HEK293T (cell line): ENCODE measurements at regions of chr17 and their contacts with region 1.

Region 1: GRCh38 chr17:46193151-46193625 is at the start of gene KANSL1:
- DNase-seq: peak; percentile 94

Region 2: GRCh38 chr17:46108550-46109110 is 84.6 kb before region 1 on chr17:
- CTCF ChIA-PET with region 1: interaction called, 11 read pairs
- POLR2A ChIA-PET with region 1: interaction called, 4 read pairs
- DNase-seq: no peak

Region 3: GRCh38 chr17:46115699-46116098 is 77.5 kb before region 1 on chr17:
- CTCF ChIA-PET with region 1: interaction called, 13 read pairs
- POLR2A ChIA-PET with region 1: interaction called, 9 read pairs
- DNase-seq: no peak

Region 4: DNA sequence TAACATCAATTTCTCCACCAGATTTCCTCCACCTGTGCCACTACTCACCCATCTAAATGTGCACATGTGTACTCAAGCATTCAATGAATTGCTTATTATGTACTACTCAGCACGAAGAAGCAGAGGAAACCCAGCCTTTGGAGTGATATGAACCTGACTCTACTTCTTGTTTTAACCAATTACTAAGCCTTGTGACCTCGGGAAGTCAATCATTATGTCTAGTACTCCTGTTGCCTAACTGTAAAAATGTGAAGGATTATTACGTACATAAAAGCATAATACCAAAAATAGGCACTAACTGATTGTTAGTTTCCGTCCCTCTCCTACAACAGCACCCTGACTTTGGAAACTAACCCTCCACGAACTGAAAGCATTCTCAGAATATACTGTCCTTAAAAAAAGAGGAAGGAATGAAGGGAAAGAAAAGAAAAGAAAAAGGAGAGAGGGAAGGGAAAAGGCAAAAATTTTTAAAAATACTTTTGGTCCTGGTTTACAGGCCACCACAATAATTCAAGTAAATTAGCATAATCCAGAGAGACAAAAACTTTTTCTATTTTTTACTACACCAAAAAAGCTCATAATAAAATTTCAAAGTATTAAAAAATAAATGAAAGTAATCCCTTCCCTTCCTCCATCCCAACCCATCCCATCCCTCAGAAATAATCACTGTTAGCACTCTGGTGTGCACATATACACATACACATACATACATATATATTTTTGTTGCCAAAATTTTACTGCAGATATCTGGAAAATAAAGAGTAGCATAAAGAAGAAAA is 53.6 kb before region 1 on chr17:
- CTCF ChIA-PET with region 1: no interaction called
- POLR2A ChIA-PET with region 1: no interaction called
- DNase-seq: no peak